Esophagus squamous epithelium (tissue), 5 donors: ENCODE measurements at regions of chr11 and their contacts with region 1.

Region 1: DNA sequence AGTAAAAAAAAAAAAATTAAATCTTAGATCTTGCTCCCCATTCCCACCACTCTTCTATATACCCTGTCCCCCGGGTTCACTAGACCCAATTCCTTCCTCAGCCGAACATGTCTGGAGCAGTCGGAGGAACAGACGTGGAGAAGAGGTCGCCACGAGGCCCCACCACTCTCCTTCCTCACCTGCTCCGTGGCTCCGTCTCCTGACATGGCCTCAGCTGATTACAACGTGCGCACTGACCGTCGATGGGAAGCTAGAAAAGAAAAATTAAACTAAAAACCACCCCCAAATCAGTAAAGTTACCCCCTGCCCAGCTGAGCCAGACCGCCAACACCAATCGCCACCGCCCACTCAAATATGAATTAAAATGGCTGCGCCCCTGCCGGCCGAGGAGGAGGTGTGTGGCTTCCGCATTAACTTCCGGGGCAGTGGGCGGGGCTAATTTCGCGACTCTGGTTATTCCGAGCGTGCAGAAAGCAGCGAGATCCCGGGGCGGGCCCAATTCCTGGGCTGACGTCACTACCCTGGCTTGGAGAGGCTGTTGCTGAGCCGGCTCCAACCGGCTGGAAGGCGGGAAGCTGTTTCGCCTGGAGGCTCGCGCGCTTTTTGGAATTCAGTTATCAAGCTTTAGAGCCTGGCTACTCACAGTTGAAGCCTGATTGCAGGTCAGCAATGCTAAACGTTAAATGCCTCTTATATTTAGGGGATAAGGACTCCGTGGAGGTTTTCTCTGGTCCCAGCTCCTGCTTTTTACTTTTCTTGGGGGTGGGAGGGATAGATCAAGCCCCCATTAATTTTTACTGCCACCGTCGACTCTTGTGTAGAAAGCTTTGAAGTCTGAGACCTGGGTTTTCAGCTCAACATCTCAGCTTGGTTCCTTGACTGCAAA is at the start of gene CSTF3:
- DNase-seq: peak; percentile 92
- H3K4me3 ChIP-seq: peak within 1 kb of the TSS; percentile 47 to 89 (median 81)
- H3K27ac ChIP-seq: peak within 1 kb of the TSS; percentile 74 to 91 (median 86)
- H3K4me1 ChIP-seq: peaks cover 5 to 52% (median 22%) of the 10 kb centered on the region in 3 donors
- H3K27me3 ChIP-seq: no peaks in the 10 kb centered on the region
- CTCF ChIP-seq: peak; percentile 23 to 82 (median 60)
- POLR2A ChIP-seq: peak in 3 of 4 donors; percentile 38 to 66 (median 41)
- total RNA-seq, gene CSTF3: 11.2 to 23.3 (median 18.2) TPM

Region 2: DNA sequence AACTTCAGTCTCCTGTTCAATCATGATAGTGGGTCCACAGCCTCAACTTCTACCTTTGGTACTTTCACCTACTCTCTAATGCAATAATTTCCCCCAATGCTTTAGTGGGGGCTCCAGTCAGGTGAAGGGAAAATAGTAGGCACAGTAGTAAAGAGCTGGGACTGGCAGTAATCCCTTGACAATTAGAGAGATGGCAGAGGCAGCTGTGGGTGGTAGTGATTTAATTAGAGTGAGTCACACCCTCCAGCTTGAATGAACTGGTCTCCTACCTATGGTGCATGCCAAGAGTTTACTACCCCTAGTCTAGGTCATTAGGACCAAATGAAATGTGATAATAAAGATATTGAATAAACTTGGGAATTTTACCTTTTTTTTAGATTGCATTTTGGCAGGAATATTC is 322.9 kb before region 1 on chr11:
- intact Hi-C with region 1: no loop called
- DNase-seq: no peak
- H3K4me3 ChIP-seq: no peak overlapping the region
- H3K27ac ChIP-seq: peak overlapping the region in 3 of 4 donors; percentile 29 to 73 (median 72)
- H3K4me1 ChIP-seq: peaks cover 0 to 51% (median 11%) of the 10 kb centered on the region in 3 donors
- H3K27me3 ChIP-seq: no peaks in the 10 kb centered on the region
- CTCF ChIP-seq: no peak
- POLR2A ChIP-seq: no peak

Region 3: GRCh38 chr11:33266393-33267215 is 105.2 kb after region 1 on chr11:
- intact Hi-C with region 1: loop called (anchors 10 kb)
- DNase-seq: no peak
- H3K4me3 ChIP-seq: no peak overlapping the region
- H3K27ac ChIP-seq: no peak overlapping the region
- H3K4me1 ChIP-seq: peaks cover 15 to 86% (median 48%) of the 10 kb centered on the region in 3 donors
- H3K27me3 ChIP-seq: no peaks in the 10 kb centered on the region
- CTCF ChIP-seq: no peak
- POLR2A ChIP-seq: no peak

Region 4: DNA sequence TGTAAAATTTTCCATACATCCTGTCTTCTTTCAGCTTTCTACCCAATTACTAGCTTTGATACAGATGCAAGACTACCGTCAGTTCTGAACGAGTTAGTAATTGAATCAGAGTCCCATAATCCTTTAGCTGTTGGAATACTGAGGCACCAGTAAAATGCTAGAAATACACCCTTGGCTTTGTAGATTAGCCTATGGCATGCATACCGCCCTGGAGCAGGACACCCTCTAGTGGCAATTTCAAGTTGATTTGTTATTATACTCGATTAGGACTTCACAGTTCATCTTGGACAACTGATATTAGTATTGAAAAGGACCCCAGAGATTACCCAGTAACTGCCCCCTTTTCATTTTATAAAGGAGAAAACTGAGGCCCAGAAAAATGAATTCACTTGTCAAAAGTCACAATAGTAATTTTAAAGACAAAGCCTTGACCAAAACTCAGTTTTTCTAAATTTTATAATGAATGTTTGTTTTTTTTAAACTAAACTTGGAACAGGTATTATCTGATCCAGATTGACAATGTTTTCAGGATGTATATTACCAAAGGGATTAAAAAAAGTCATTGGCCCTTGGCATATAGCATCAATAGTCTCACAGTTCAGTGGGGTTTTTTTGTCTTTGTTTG is 168.5 kb after region 1 on chr11:
- intact Hi-C with region 1: loop called (anchors 5 kb)
- DNase-seq: no peak
- H3K4me3 ChIP-seq: no peak overlapping the region
- H3K27ac ChIP-seq: no peak overlapping the region
- H3K4me1 ChIP-seq: peaks cover 4 to 61% (median 6%) of the 10 kb centered on the region in 3 donors
- H3K27me3 ChIP-seq: no peaks in the 10 kb centered on the region
- CTCF ChIP-seq: peak in 5 of 6 experiments; percentile 47 to 77 (median 60)
- POLR2A ChIP-seq: no peak